ENCODE measurements at regions of chr11 and their contacts with region 1.

Region 1: DNA sequence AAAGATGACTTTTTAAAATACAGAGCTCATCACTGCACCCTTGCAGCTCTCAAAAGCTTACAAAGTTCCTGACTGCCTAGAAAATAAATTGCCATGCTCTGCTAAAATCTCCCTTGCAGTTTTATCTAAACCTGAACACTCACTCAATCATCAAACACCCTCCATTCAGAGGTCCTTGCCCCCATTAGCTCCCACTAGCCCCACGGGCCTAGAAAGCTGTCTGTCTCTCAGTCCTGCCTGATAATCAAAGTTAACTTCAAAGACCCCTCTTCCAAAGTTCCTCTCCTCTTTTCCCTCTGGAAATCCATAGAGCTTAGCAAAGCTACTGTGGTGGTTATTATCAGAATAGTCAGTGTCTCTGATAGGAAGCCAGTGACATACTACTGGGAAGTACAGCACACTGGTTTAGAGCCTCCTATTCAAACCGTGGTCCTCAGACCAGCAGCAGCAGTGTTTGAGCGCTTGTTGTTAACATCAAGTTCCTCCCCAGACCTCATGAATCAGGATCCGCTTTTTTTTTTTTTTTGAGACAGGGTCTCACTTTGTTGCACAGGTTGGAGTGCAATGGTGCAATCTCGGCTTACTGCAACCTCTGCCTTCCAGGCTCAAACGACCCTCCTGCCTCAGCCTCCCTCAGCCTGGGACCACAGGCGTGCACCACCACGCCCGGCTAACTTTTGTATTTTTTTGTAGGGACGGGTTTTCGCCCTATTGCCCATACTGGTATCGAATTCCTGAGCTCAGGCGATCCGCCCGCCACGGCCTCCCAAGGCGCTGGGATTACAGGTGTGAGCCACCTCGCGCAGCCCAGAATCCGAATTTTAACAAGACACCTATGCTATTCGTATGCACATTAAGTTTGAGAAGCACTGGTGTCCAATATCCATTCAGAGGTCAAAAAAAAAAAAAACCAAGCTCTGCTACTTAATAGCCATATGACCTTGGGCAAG is 1.2 kb downstream of the NDUFC2 start:
- DNase-seq: no peak
- ATAC-seq: no peak
- H3K4me3 ChIP-seq: peak overlapping the region; percentile 86
- H3K27ac ChIP-seq: no peak overlapping the region
- H3K4me1 ChIP-seq: peaks cover 33% of the 10 kb centered on the region
- H3K27me3 ChIP-seq: no peaks in the 10 kb centered on the region
- CTCF ChIP-seq: no peak

Region 2: DNA sequence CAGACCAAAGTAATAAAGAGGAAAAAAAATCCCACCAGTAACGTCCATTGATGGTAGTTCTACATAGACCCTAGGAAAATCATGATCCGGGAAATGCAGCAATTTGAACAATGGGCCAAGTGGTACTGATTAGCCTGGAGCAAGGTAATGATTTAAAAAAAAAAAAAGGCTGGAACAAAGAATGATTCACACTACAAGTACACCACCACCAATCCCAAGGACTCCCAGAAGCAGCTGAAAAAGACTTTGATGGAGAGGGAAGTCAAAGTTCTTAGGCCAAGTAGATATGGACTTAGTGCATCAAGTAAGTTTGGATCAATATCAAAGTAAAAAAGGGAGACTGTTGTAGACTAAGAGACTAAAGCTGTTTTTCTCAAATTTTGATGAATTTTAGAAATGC is 67.2 kb before region 1 on chr11:
- CTCF ChIA-PET with region 1: no interaction called
- POLR2A ChIA-PET with region 1: interaction called, 10 read pairs
- intact Hi-C with region 1: no loop called
- DNase-seq: no peak
- ATAC-seq: no peak
- H3K4me3 ChIP-seq: no peak overlapping the region
- H3K27ac ChIP-seq: no peak overlapping the region
- H3K4me1 ChIP-seq: no peaks in the 10 kb centered on the region
- H3K27me3 ChIP-seq: no peaks in the 10 kb centered on the region
- CTCF ChIP-seq: no peak